ENCODE measurements at regions of chr19 and their contacts with region 1.

Region 1: GRCh38 chr19:57850553-57851017 is 926 bp downstream of the ZNF587 start:
- DNase-seq: peak in 1 of 2 experiments; percentile 49
- H3K4me3 ChIP-seq: peak overlapping the region; percentile 79 to 81 (median 79)
- H3K27ac ChIP-seq: peak overlapping the region; percentile 83
- H3K4me1 ChIP-seq: peaks cover 0 to 6% (median 4%) of the 10 kb centered on the region in 4 experiments; a peak in 6 of 7 replicates
- H3K27me3 ChIP-seq: no peaks in the 10 kb centered on the region
- CTCF ChIP-seq: no peak
- EP300 ChIP-seq: no peak
- POLR2A ChIP-seq: peak in 1 of 2 experiments; percentile 13; a peak in 1 of 3 replicates
- RAD21 ChIP-seq: no peak

Region 2: GRCh38 chr19:57648331-57649003 is 202.1 kb before region 1 on chr19:
- CTCF ChIA-PET with region 1: no interaction called
- POLR2A ChIA-PET with region 1: no interaction called
- DNase-seq: peak in 1 of 2 experiments; percentile 14
- H3K4me3 ChIP-seq: no peak overlapping the region
- H3K27ac ChIP-seq: no peak overlapping the region
- H3K4me1 ChIP-seq: peaks cover 0 to 2% (median 0%) of the 10 kb centered on the region in 4 experiments; a peak in 1 of 7 replicates
- H3K27me3 ChIP-seq: no peaks in the 10 kb centered on the region
- CTCF ChIP-seq: no peak
- EP300 ChIP-seq: no peak
- POLR2A ChIP-seq: no peak
- RAD21 ChIP-seq: 0 out of 4 replicates have a peak, but pooled peaks of 1 of the 2 experiments have one; percentile 7

Region 3: GRCh38 chr19:57819475-57820148 is 31.0 kb before region 1 on chr19:
- CTCF ChIA-PET with region 1: no interaction called
- POLR2A ChIA-PET with region 1: interaction called, 20 read pairs
- DNase-seq: peak; percentile 63 to 73
- H3K4me3 ChIP-seq: peak overlapping the region; percentile 84 to 99 (median 96)
- H3K27ac ChIP-seq: peak overlapping the region; percentile 80
- H3K4me1 ChIP-seq: peaks cover 3 to 7% (median 5%) of the 10 kb centered on the region in 4 experiments
- H3K27me3 ChIP-seq: no peaks in the 10 kb centered on the region
- CTCF ChIP-seq: 0 out of 4 replicates have a peak, but pooled peaks of 1 of the 3 experiments have one; percentile 1
- EP300 ChIP-seq: no peak
- POLR2A ChIP-seq: peak; percentile 67 to 85
- RAD21 ChIP-seq: no peak

Region 4: DNA sequence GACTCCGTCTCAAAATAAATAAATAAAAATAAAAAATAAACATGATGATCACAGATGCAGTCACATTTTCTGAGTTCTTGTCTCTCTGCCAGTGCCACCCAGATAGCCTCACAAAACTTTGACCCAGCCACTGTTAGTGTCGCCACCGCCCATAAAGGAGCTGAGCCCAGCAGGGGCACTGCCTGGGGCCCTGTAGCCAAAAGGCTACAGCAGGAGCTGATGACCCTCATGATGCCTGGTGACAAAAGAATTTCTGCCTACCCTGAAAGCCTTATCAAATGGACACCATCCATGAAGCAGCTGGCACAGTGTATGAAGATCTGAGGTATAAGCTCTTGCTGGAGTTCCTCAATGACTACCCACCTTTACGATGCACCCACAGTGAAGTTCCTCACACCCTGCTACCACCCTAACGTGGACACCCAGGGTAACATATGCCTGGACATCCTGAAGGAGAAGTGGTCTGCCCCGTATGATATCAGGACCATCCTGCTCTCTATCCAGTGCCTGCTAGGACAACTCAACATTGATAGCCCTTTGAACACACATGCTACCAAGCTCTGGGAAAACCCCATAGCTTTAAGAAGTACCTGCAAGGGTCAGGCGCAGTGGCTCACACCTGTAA is 17.4 kb after region 1 on chr19:
- CTCF ChIA-PET with region 1: no interaction called
- POLR2A ChIA-PET with region 1: interaction called, 38 read pairs
- DNase-seq: no peak
- H3K4me3 ChIP-seq: no peak overlapping the region
- H3K27ac ChIP-seq: no peak overlapping the region
- H3K4me1 ChIP-seq: no peaks in the 10 kb centered on the region
- H3K27me3 ChIP-seq: no peaks in the 10 kb centered on the region
- CTCF ChIP-seq: no peak
- EP300 ChIP-seq: no peak
- POLR2A ChIP-seq: peak; percentile 52 to 56; a peak in 2 of 3 replicates
- RAD21 ChIP-seq: no peak

Region 5: DNA sequence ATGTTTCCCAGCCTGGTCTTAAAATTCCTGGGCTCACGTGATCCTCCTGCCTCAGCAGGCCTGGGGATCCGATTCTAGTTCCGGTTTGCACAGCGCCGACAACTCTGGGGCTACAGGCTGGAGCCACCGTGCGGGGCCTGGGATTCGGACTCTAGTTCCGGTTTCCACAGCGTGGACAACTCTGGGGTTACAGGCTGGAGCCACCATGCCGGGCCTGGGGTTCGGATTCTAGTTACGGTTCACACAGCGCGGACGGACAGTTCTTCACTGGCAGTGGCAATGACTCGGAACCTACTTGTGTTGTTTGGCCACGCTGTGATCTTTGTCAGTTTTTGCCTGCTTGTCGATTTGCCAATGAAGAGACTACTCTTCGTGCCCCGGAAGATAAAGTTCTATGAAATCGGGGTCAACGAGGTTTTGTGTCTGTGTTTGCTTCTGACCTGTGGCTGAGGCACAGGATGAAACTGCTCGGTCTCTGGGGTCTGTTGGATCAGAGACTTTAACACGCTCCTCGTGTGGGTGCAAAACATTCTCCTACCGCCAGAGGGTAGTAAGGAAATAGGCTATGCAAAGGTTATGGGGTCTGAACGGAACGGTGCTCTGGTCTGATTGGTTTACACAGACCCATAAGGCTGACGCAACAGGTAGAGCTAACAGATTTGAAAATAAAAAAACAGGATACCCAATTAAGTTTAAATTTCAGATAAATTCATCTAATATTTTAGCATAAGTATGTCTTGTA is 171.1 kb after region 1 on chr19:
- CTCF ChIA-PET with region 1: no interaction called
- POLR2A ChIA-PET with region 1: no interaction called
- DNase-seq: peak in 1 of 2 experiments; percentile 72
- H3K4me3 ChIP-seq: no peak overlapping the region
- H3K27ac ChIP-seq: no peak overlapping the region
- H3K4me1 ChIP-seq: no peaks in the 10 kb centered on the region
- H3K27me3 ChIP-seq: no peaks in the 10 kb centered on the region; a peak in 3 of 7 replicates
- CTCF ChIP-seq: peak; percentile 46 to 84 (median 71)
- EP300 ChIP-seq: no peak
- POLR2A ChIP-seq: no peak
- RAD21 ChIP-seq: peak; percentile 88 to 91